ENCODE measurements at regions of chr20 and their contacts with region 1.

Region 1: DNA sequence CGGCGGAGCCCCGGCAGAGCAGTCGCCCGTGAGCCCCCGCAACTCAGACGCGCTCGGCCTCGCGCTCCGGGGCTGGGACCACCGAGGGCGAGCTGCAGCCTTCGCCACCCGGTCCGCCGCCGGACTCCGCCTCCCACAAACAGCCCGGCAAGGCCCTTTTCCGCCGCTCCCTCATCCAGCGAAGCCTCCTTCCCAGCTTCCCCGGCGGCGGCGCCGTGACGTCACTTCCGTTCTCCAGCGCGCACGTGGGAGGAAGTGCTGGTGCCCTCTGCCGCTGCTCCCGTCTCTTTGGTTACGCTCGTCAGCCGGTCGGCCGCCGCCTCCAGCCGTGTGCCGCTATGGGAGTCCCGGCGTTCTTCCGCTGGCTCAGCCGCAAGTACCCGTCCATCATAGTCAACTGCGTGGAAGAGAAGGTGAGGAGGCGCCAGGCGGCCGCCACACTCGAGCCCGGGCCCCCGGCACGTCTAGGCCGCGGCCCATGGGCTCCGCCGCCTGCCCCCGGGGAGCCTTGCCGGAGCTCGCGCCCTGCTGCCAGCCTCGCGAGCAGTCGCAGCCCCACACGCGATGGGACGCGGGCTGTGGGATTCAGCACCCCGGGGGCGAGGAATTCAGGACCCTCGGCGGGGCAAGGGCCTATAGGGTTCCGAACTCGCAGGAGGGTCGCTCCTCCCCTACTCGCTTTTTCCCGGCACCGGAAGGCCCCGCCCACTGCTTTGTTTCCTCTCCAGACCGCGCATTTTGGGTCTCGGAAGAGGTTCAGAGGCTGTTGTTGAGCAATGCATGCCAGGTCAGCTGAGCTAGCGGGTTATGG is at the start of gene XRN2:
- DNase-seq: peak; percentile 88 to 97 (median 92)
- ATAC-seq: peak; percentile 91
- H3K4me3 ChIP-seq: peak within 1 kb of the TSS; percentile 84
- H3K4me3 Mint-ChIP-seq: peak within 1 kb of the TSS; percentile 96 to 99 (median 97)
- H3K27ac ChIP-seq: peak within 1 kb of the TSS; percentile 95
- H3K27ac Mint-ChIP-seq: peak within 1 kb of the TSS; percentile 93 to 100 (median 99)
- H3K4me1 ChIP-seq: peaks cover 9 to 19% of the 10 kb centered on the region in 2 donors
- H3K4me1 Mint-ChIP-seq: peaks cover 22 to 39% (median 29%) of the 10 kb centered on the region in 7 donors
- H3K27me3 ChIP-seq: no peaks in the 10 kb centered on the region
- H3K27me3 Mint-ChIP-seq: no peaks in the 10 kb centered on the region
- total RNA-seq, gene XRN2: 51.7 to 71.0 (median 56.5) TPM

Region 2: GRCh38 chr20:20699144-20699543 is 604.1 kb before region 1 on chr20:
- CTCF ChIA-PET with region 1: no interaction called
- POLR2A ChIA-PET with region 1: no interaction called
- intact Hi-C with region 1: no loop called
- DNase-seq: no peak
- ATAC-seq: no peak
- H3K4me3 ChIP-seq: no peak overlapping the region
- H3K4me3 Mint-ChIP-seq: no peak overlapping the region
- H3K27ac ChIP-seq: no peak overlapping the region
- H3K27ac Mint-ChIP-seq: no peak overlapping the region
- H3K4me1 ChIP-seq: no peaks in the 10 kb centered on the region
- H3K4me1 Mint-ChIP-seq: peaks cover 7 to 55% (median 40%) of the 10 kb centered on the region in 7 donors
- H3K27me3 ChIP-seq: no peaks in the 10 kb centered on the region
- H3K27me3 Mint-ChIP-seq: no peaks in the 10 kb centered on the region

Region 3: DNA sequence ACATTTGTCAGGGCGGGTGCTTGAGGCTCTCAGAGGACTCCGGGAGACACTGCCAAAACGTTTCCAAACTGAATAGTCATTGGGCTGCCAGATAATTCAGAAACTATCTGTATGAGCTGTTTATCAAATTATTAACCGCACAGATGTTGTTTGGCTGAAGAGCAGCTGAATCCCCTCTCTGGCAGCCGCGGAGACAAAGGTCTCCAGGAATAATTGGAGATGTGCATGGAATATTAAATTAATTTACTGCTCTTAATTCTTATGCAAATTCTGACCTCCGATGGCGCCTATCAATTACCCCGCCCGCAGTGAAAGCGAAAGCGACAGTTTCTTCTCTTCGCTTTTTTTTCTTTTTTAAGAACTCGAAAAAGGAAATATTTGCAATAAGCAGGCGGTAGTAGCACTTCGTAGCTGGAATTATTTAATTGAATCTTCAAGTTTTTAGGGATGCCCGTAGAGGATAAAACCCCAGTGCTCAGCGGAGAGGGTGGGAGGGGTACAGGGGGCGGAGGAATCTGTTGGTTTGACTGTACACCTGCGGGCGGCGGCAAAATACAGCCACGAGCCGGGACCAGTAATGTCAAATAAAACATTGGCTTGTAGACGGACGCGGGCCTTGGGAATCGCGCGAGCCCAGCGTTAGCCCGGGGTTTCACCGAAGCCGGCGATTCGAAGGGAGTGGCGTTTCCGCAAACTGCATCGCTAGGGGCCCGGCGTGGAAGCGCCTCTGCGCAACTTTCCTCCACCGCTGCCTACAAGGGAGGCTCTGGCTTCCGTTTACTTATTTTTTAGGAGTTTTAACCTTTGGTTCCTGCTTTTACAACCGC is 203.3 kb before region 1 on chr20:
- CTCF ChIA-PET with region 1: no interaction called
- POLR2A ChIA-PET with region 1: no interaction called
- intact Hi-C with region 1: loop called (anchors 1 to 2 kb)
- DNase-seq: peak in 5 of 9 donors; percentile 32 to 54 (median 40)
- ATAC-seq: peak; percentile 64
- H3K4me3 ChIP-seq: peak overlapping the region; percentile 51
- H3K4me3 Mint-ChIP-seq: peak overlapping the region; percentile 78 to 91 (median 84)
- H3K27ac ChIP-seq: no peak overlapping the region
- H3K27ac Mint-ChIP-seq: peak overlapping the region in 5 of 9 donors; percentile 18 to 90 (median 38)
- H3K4me1 ChIP-seq: peaks cover 20 to 34% of the 10 kb centered on the region in 2 donors
- H3K4me1 Mint-ChIP-seq: peaks cover 16 to 50% (median 45%) of the 10 kb centered on the region in 7 donors
- H3K27me3 ChIP-seq: peaks cover 18 to 59% of the 10 kb centered on the region in 2 donors
- H3K27me3 Mint-ChIP-seq: peaks cover 76 to 93% (median 90%) of the 10 kb centered on the region in 5 donors

Region 4: GRCh38 chr20:21235484-21236445 is 67.5 kb before region 1 on chr20:
- CTCF ChIA-PET with region 1: no interaction called
- POLR2A ChIA-PET with region 1: no interaction called
- intact Hi-C with region 1: loop called in 1 of 2 experiments (anchors 5 kb)
- DNase-seq: peak; percentile 24 to 69 (median 65)
- ATAC-seq: peak; percentile 84
- H3K4me3 ChIP-seq: no peak overlapping the region
- H3K4me3 Mint-ChIP-seq: no peak overlapping the region
- H3K27ac ChIP-seq: no peak overlapping the region
- H3K27ac Mint-ChIP-seq: no peak overlapping the region
- H3K4me1 ChIP-seq: no peaks in the 10 kb centered on the region
- H3K4me1 Mint-ChIP-seq: peaks cover 0 to 6% (median 4%) of the 10 kb centered on the region in 7 donors
- H3K27me3 ChIP-seq: no peaks in the 10 kb centered on the region
- H3K27me3 Mint-ChIP-seq: no peaks in the 10 kb centered on the region

Region 5: DNA sequence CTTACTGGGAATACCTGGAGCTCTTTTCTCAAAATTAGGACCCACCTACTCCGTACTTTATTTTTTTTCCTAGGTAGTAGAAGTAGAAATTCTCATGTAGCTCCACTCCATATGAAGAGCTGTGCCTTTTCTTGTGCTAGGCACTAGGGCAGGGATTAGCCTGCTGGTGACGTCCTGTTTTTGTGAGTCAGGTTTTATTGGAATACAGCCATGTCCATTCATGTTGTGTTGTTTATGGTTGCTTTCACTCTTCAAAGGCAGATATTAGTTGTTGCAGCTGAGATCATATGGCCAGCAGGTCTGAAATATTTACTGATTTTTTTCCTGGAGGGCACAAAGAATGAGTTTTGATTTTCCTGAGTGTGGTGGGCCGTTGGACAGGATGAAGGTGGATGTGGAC is 20.4 kb after region 1 on chr20:
- CTCF ChIA-PET with region 1: no interaction called
- POLR2A ChIA-PET with region 1: interaction called, 20 read pairs
- intact Hi-C with region 1: loop called (anchors 1 kb)
- DNase-seq: no peak
- ATAC-seq: no peak
- H3K4me3 ChIP-seq: no peak overlapping the region
- H3K4me3 Mint-ChIP-seq: peak overlapping the region in 7 of 10 donors; percentile 13 to 70 (median 61)
- H3K27ac ChIP-seq: no peak overlapping the region
- H3K27ac Mint-ChIP-seq: peak overlapping the region in 7 of 9 donors; percentile 30 to 72 (median 67)
- H3K4me1 ChIP-seq: peaks cover 30 to 37% of the 10 kb centered on the region in 2 donors
- H3K4me1 Mint-ChIP-seq: peaks cover 50 to 78% (median 72%) of the 10 kb centered on the region in 7 donors
- H3K27me3 ChIP-seq: no peaks in the 10 kb centered on the region
- H3K27me3 Mint-ChIP-seq: no peaks in the 10 kb centered on the region

Region 6: GRCh38 chr20:21357844-21358243 is 54.6 kb after region 1 on chr20:
- CTCF ChIA-PET with region 1: no interaction called
- POLR2A ChIA-PET with region 1: interaction called, 3 read pairs
- intact Hi-C with region 1: loop called in 1 of 2 experiments (anchors 5 kb)
- DNase-seq: no peak
- ATAC-seq: no peak
- H3K4me3 ChIP-seq: no peak overlapping the region
- H3K4me3 Mint-ChIP-seq: no peak overlapping the region
- H3K27ac ChIP-seq: no peak overlapping the region
- H3K27ac Mint-ChIP-seq: no peak overlapping the region
- H3K4me1 ChIP-seq: no peaks in the 10 kb centered on the region
- H3K4me1 Mint-ChIP-seq: peaks cover 0 to 17% (median 6%) of the 10 kb centered on the region in 7 donors
- H3K27me3 ChIP-seq: no peaks in the 10 kb centered on the region
- H3K27me3 Mint-ChIP-seq: no peaks in the 10 kb centered on the region

Region 7: DNA sequence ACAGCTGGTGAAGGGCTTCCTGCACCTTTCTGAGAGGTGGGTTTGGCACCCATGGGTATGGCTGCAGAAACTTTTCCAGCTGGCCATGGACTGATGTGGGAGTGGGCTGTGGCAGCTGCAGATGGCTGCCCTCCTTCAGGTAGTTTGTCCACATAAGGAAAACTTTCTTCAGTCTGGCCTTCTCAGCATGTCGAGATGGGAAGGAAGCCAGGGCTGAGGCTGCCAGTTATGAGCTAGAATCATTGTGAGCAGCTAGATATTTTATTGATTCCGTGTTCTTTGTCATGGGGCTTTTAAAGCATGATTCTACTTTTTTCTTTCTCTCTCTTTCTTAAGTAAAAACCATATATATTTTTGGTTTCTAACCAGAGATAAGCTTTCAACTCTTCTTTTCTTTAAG is 77.4 kb after region 1 on chr20:
- CTCF ChIA-PET with region 1: no interaction called
- POLR2A ChIA-PET with region 1: no interaction called
- intact Hi-C with region 1: no loop called
- DNase-seq: no peak
- ATAC-seq: no peak
- H3K4me3 ChIP-seq: no peak overlapping the region
- H3K4me3 Mint-ChIP-seq: no peak overlapping the region
- H3K27ac ChIP-seq: no peak overlapping the region
- H3K27ac Mint-ChIP-seq: peak overlapping the region in 1 of 9 donors; percentile 36
- H3K4me1 ChIP-seq: no peaks in the 10 kb centered on the region
- H3K4me1 Mint-ChIP-seq: peaks cover 4 to 19% (median 5%) of the 10 kb centered on the region in 7 donors
- H3K27me3 ChIP-seq: no peaks in the 10 kb centered on the region
- H3K27me3 Mint-ChIP-seq: no peaks in the 10 kb centered on the region

Region 8: GRCh38 chr20:21548390-21549035 is 245.2 kb after region 1 on chr20:
- CTCF ChIA-PET with region 1: no interaction called
- POLR2A ChIA-PET with region 1: interaction called, 4 read pairs
- intact Hi-C with region 1: loop called (anchors 1 to 5 kb)
- DNase-seq: peak in 8 of 9 donors; percentile 43 to 86 (median 82)
- ATAC-seq: peak; percentile 91
- H3K4me3 ChIP-seq: peak overlapping the region; percentile 51
- H3K4me3 Mint-ChIP-seq: peak overlapping the region; percentile 60 to 81 (median 75)
- H3K27ac ChIP-seq: peak overlapping the region; percentile 79
- H3K27ac Mint-ChIP-seq: peak overlapping the region; percentile 88 to 97 (median 94)
- H3K4me1 ChIP-seq: peaks cover 4 to 35% of the 10 kb centered on the region in 2 donors
- H3K4me1 Mint-ChIP-seq: peaks cover 10 to 48% (median 37%) of the 10 kb centered on the region in 7 donors
- H3K27me3 ChIP-seq: no peaks in the 10 kb centered on the region
- H3K27me3 Mint-ChIP-seq: peaks cover 0 to 3% (median 0%) of the 10 kb centered on the region in 5 donors